PC-9 (cell line): ENCODE measurements at regions of chr10 and their contacts with region 1.

Region 1: DNA sequence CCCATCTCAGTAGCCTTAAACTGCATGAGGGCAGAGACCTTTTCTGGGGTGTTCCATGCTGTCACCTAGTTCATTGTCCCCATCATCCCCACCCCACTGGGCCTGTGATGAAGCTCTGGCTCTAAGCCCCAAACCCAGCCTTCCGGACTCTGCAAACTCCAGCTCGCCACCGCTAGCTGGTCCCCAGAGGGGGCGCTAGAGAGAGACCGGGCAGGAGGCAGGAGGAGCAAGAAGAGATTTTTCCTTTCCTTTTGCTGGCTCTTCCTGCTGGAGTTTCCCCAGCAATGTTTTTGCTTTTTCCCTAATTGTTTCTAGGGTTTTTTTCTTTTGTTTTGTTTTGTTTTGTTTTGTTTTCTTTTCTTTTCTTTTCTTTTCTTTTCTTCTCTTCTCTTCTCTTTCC is 234.4 kb downstream of the TEX36 start:
- DNase-seq: no peak
- H3K4me3 ChIP-seq: no peak overlapping the region
- H3K27ac ChIP-seq: no peak overlapping the region
- H3K4me1 ChIP-seq: no peaks in the 10 kb centered on the region
- H3K27me3 ChIP-seq: no peaks in the 10 kb centered on the region
- CTCF ChIP-seq: peak; percentile 66

Region 2: DNA sequence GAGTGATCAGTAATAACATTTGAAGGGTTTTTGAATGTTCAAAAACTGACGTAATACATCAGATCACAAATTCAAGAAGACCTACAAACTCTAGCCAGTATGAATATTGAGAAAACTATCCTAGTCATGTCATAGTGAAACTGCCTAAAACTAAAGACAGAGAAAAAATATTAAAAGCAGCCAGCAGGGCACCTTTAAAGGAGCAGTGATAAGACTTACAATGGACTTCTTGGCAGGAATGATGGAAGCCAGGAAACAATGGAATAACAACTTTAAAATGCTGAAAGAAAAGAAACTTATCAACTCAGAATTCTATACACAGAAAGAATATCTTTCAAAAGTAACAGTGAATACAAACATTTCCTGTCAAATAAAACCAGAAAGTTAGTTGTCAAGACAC is 209.9 kb before region 1 on chr10:
- CTCF ChIA-PET with region 1: no interaction called
- POLR2A ChIA-PET with region 1: no interaction called
- intact Hi-C with region 1: no loop called
- DNase-seq: no peak
- H3K4me3 ChIP-seq: no peak overlapping the region
- H3K27ac ChIP-seq: no peak overlapping the region
- H3K4me1 ChIP-seq: no peaks in the 10 kb centered on the region
- H3K27me3 ChIP-seq: no peaks in the 10 kb centered on the region
- CTCF ChIP-seq: no peak

Region 3: GRCh38 chr10:125294110-125294509 is 154.5 kb before region 1 on chr10:
- CTCF ChIA-PET with region 1: no interaction called
- POLR2A ChIA-PET with region 1: no interaction called
- intact Hi-C with region 1: no loop called
- DNase-seq: no peak
- H3K4me3 ChIP-seq: no peak overlapping the region
- H3K27ac ChIP-seq: no peak overlapping the region
- H3K4me1 ChIP-seq: no peaks in the 10 kb centered on the region
- H3K27me3 ChIP-seq: no peaks in the 10 kb centered on the region
- CTCF ChIP-seq: no peak

Region 4: DNA sequence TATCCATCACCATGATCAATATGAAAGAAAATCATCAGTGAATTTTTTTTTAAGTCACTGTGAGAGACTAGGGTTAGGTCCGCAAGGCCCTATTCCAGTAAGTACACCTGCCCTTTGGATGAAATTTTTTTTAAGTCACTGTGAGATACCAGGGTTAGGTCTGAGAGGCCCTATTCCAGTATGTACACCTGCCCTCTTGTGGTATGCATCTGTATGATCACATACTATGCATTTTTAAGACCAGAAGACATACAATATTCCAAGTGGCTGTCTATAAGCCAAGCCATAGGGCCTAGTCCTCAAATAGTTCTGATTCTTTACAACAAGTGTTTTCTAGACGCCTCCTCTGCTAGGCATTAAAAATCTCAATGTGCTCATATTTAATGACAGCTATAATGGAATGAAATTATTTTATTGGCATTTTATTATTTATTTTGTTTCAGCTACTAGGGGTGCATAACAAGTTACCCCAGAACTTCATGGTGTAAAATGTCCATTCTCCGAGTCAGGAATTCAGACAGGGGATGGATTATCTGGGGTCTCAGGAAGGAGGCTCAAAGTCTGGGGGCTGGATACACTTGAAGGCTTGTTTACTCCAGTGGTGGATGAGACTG is 181.3 kb after region 1 on chr10:
- CTCF ChIA-PET with region 1: interaction called, 3 read pairs
- POLR2A ChIA-PET with region 1: no interaction called
- intact Hi-C with region 1: loop called (anchors 10 kb)
- DNase-seq: peak; percentile 4 to 65
- H3K4me3 ChIP-seq: no peak overlapping the region
- H3K27ac ChIP-seq: no peak overlapping the region
- H3K4me1 ChIP-seq: no peaks in the 10 kb centered on the region
- H3K27me3 ChIP-seq: no peaks in the 10 kb centered on the region
- CTCF ChIP-seq: peak; percentile 74